ENCODE measurements at regions of chr15 and their contacts with region 1.

Region 1: DNA sequence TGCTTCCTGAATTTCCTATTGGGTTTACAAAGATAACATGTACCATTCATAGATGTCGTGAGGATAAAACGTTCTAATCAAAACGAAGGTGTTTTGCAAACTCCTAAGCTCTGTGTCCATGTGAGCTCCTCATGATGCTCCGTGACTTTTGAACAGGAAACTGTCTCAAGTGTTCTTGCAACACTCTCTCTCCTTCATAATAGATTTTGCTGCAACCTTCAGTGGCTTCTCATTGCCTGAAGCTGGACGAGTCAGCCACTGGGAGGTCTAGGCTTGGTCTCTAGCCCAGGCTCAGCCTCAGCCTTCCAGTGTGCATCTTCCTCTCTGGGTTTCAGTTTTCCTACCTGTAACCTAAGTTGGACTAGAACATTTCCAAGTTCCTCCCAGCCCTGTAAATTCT is 18.7 kb upstream of the BCL2A1 start:
- DNase-seq: peak; percentile 49
- ATAC-seq: peak; percentile 35; the same call in 1 of the 2 replicates
- H3K4me3 ChIP-seq: no peak overlapping the region
- H3K27ac ChIP-seq: no peak overlapping the region
- H3K4me1 ChIP-seq: no peaks in the 10 kb centered on the region
- H3K27me3 ChIP-seq: no peaks in the 10 kb centered on the region; the same call in 1 of the 2 replicates
- CTCF ChIP-seq: no peak
- POLR2A ChIP-seq: no peak
- RAD21 ChIP-seq: no peak

Region 2: DNA sequence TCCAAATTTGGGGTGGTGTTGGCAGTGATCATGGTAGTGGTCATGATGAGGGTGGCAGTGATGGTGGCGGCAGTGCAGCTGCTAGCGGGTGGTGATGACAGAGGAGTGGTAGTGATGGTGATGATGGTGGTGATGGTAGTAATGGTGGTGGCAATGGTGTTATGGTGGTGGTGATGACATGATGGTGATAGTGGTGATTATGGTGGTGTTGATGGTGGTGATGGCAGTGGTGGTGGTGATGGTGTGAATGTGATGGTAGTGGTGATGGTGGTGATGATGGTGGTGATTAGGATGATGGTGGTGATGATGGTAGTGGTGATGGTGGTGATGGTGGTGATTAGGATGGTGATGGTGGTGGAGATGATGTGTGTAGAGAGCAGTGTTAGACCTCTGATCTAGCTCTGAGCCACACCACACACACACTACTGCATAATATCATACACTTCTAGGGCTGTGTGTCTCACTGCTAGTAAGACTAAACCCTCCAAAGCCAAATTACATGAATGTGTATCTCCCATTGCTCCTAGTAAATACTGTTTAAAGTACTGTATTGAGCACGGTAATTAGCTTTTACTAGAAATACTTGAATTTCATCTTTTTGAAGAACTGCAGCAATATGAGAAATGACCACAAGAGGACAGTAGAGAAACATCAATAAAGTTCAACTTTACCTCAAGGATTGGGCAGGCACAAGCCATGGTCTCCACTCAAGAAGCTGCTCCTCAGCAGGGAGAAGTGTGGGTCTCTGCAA is 649.9 kb before region 1 on chr15:
- CTCF ChIA-PET with region 1: no interaction called
- POLR2A ChIA-PET with region 1: no interaction called
- dilution Hi-C with region 1: no loop called
- in situ Hi-C with region 1: no loop called
- intact Hi-C with region 1: loop called (anchors 1 kb)
- DNase-seq: peak; percentile 60
- ATAC-seq: peak; percentile 93
- H3K4me3 ChIP-seq: no peak overlapping the region
- H3K27ac ChIP-seq: no peak overlapping the region
- H3K4me1 ChIP-seq: no peaks in the 10 kb centered on the region
- H3K27me3 ChIP-seq: no peaks in the 10 kb centered on the region
- CTCF ChIP-seq: peak; percentile 96
- POLR2A ChIP-seq: no peak
- RAD21 ChIP-seq: peak; percentile 85

Region 3: DNA sequence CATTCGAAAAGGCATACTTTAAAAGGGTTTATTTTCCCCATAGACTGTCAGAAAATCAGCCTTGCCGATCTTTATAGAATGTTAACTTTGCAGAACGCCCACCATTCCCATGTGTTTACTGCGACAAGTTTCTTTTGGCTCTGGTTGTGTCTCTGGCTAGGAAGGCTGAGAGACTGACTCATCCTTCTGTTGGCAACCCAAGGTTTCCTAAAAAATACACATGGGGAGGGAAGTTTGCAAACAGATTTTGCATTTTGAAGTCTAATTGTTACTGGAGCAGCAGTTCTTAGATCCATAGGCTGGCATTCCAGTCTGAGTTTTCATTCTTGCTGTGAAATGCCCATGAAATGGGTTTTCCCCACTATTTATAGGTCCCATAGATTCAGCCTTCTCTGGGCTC is 595.5 kb before region 1 on chr15:
- CTCF ChIA-PET with region 1: no interaction called
- POLR2A ChIA-PET with region 1: no interaction called
- dilution Hi-C with region 1: no loop called
- in situ Hi-C with region 1: no loop called
- intact Hi-C with region 1: loop called (anchors 5 kb)
- DNase-seq: peak; percentile 79
- ATAC-seq: peak; percentile 87
- H3K4me3 ChIP-seq: no peak overlapping the region
- H3K27ac ChIP-seq: no peak overlapping the region
- H3K4me1 ChIP-seq: peaks cover 6% of the 10 kb centered on the region; the same call in 1 of the 2 replicates
- H3K27me3 ChIP-seq: no peaks in the 10 kb centered on the region
- CTCF ChIP-seq: no peak
- POLR2A ChIP-seq: no peak
- RAD21 ChIP-seq: no peak

Region 4: DNA sequence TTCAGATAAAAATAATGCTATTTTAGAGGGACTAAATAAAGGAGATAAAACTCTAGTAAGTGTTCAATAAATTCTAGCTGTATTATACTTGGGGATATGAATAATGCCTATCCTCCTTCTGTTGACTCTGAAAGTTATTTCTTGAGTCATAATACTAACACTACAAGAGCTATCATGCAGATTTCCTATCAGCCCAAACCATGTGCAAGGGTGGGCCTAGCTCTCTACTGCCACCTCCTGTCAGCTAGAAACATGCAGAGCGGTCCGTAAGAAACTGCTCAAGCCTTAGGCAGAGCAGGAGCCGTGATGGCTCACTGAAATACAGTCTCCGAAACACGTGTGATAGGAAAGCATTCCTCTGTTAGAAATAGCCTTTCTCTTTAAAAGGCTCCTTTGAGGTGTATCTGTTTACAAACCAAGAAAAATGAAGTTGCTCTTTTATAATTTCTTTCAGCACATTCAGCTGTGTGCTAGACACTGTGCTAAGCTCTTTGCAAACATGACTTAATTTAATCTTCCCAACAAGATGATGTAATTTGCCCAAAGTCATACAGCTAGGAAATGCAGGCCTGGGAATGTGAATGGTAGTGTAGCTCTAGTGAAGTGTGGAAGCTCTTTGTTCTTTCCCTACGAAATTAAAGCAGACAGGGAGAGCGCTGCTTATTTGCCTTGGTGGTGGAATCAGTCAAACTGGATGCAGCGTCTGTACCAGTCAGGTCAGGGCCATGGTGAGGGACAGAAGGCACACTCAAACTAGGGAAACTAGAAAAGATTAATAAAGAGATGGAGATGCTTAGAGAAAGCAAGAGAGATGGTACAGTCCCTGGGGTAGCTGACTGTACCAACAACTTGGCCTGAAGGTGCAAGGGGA is 136.0 kb before region 1 on chr15:
- CTCF ChIA-PET with region 1: interaction called, 4 read pairs
- POLR2A ChIA-PET with region 1: no interaction called
- dilution Hi-C with region 1: no loop called
- in situ Hi-C with region 1: no loop called
- intact Hi-C with region 1: loop called (anchors 1 kb)
- DNase-seq: peak; percentile 93
- ATAC-seq: peak; percentile 100
- H3K4me3 ChIP-seq: no peak overlapping the region
- H3K27ac ChIP-seq: no peak overlapping the region
- H3K4me1 ChIP-seq: no peaks in the 10 kb centered on the region
- H3K27me3 ChIP-seq: no peaks in the 10 kb centered on the region
- CTCF ChIP-seq: peak; percentile 95
- POLR2A ChIP-seq: no peak
- RAD21 ChIP-seq: peak; percentile 90

Region 5: DNA sequence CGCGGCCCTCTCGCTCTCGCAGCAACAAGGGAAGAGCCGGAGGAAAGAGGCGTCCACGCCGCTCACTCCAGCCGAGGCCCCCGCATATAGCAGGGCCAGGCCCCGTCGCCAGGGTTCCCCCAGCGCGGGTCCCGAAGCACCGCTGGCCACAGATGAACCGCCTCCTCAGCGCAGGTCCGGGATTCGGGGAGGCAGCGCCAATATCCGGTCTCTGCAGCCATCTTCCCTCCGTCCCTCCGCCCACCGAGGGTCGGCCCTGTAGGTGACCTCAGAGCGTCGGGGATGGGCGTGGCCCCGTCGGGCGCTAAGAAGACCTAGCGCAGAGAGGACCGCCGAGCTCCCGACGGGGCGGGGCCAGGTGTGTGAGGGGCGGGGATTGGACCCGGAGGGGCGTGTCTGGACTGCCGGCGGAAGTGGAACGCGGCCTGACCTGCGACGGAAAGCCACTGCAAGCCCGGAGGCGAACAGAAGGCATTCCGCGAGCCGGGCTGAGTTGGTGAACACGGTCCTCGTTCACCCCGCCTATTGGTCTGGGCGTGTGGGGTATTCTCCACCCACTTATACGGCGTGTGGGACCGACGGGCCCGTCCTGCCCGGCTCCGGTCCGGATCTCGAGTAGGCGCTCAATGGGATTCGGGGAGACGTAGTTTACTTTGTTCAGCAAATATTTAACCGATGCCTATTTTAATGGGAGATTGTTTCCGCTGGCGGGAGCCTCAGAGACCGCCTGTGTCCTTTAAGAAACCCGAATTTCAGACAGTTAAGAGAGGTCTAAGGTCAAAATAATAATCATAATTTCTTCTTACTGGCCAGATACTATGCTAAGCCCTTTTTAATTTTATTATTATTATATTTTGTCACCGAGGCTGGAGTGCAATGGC is 65.9 kb before region 1 on chr15:
- CTCF ChIA-PET with region 1: no interaction called
- POLR2A ChIA-PET with region 1: no interaction called
- dilution Hi-C with region 1: no loop called
- in situ Hi-C with region 1: no loop called
- intact Hi-C with region 1: loop called (anchors 1 kb)
- DNase-seq: peak; percentile 93
- ATAC-seq: peak; percentile 97
- H3K4me3 ChIP-seq: peak overlapping the region; percentile 89
- H3K27ac ChIP-seq: peak overlapping the region; percentile 89
- H3K4me1 ChIP-seq: no peaks in the 10 kb centered on the region
- H3K27me3 ChIP-seq: no peaks in the 10 kb centered on the region
- CTCF ChIP-seq: no peak
- POLR2A ChIP-seq: peak; percentile 85
- RAD21 ChIP-seq: no peak; the same call in 1 of the 2 replicates

Region 6: GRCh38 chr15:80093854-80094418 is 104.3 kb after region 1 on chr15:
- CTCF ChIA-PET with region 1: no interaction called
- POLR2A ChIA-PET with region 1: no interaction called
- dilution Hi-C with region 1: no loop called
- in situ Hi-C with region 1: no loop called
- intact Hi-C with region 1: no loop called
- DNase-seq: no peak
- ATAC-seq: peak; percentile 46; the same call in 1 of the 2 replicates
- H3K4me3 ChIP-seq: no peak overlapping the region
- H3K27ac ChIP-seq: no peak overlapping the region
- H3K4me1 ChIP-seq: peaks cover 1% of the 10 kb centered on the region; the same call in 1 of the 2 replicates
- H3K27me3 ChIP-seq: no peaks in the 10 kb centered on the region
- CTCF ChIP-seq: no peak
- POLR2A ChIP-seq: no peak
- RAD21 ChIP-seq: no peak

Region 7: DNA sequence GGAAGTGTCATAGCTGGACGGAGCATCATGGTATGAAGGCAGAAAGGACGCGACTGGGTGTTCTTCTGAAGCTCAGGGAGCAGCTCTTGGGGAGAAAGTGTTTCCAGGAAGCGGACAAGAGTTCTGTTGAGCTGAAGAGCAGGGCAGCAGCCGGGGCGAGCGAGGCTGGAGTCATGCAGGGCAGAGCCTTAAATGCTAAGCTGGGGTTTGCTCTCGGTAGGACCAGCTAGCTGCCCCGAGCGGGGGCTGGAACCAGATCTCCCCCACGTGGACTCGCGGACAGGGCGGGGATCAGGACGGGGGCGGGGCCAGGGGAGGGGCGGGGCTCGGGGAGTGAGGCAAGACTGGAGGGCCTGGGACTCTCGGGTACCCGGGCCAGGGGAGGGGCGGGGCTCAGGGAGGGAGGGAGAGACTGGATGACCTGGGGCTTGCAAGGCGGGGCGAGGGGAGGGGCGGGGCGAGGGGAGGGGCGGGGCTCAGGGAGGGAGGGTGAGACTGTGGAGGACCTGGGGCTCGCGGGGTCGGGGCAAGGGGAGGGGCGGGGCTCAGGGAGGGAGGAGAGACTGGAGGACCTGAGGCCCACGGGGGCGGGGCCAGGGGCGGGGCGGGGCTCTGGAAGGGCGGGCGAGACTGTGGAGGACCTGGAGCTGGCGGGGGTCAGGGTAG is 162.6 kb after region 1 on chr15:
- CTCF ChIA-PET with region 1: no interaction called
- POLR2A ChIA-PET with region 1: no interaction called
- dilution Hi-C with region 1: no loop called
- in situ Hi-C with region 1: no loop called
- intact Hi-C with region 1: no loop called
- DNase-seq: peak; percentile 90
- ATAC-seq: peak; percentile 86
- H3K4me3 ChIP-seq: peak overlapping the region; percentile 97
- H3K27ac ChIP-seq: peak overlapping the region; percentile 24
- H3K4me1 ChIP-seq: peaks cover 8% of the 10 kb centered on the region
- H3K27me3 ChIP-seq: no peaks in the 10 kb centered on the region
- CTCF ChIP-seq: no peak
- POLR2A ChIP-seq: no peak; the same call in 1 of the 2 replicates
- RAD21 ChIP-seq: no peak